ENCODE measurements at regions of chr1 and their contacts with region 1.

Region 1: DNA sequence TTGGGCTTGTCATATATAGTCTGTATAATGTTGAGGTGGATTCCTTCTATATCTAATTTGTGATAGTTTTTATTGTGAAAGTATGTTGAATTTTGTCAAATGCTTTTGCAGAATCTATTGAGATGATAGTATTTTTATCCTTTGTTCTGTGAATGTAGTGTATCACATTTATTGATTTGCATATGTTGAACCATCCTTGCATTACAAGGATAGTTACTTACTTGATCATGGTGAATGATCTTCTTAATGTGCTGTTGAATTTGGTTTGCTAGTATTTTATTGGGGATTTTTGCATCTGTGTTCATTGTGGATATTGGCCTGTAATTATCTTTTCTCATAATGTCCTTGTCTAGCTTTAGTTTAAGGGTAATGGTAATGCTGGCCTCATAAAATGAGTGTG is 8.3 kb downstream of the FGGY start:
- DNase-seq: no peak
- CTCF ChIP-seq: no peak

Region 2: DNA sequence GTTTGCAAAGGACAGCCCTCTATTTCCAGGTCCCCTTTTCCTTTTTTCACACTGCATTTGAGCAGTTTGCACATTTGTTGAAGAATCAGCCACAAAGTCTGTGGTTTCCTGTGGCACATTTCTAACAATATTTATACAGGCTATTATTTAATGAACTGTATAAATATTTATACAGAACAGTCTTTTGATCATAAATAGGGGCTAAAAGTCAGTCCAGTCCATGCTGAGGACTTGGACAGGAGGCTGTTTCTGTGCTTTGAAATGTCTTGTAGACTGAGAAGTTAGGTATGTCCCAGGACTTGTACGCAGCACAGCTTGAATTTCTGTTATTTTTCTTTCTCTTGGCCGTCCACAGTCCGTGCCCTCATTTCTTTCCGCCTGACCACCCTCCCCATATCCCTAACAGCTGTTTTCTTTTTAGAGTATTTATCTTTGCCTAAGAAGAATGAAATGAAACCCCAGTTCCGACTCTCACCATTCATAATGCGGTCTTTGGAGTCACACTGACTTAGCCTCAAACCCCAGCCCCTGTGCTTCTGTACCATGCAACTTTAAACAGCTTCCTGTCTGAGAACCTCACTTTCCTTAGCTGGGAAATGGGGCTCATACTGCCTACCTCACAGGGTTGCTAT is 11.4 kb after region 1 on chr1:
- CTCF ChIA-PET with region 1: interaction called, 28 read pairs
- POLR2A ChIA-PET with region 1: no interaction called
- DNase-seq: no peak
- CTCF ChIP-seq: no peak